ENCODE measurements at regions of chr11 and their contacts with region 1.

Region 1: GRCh38 chr11:111833524-111833923 is 37.9 kb downstream of the ALG9 start:
- DNase-seq: no peak
- H3K4me3 ChIP-seq: no peak overlapping the region
- H3K27ac ChIP-seq: no peak overlapping the region
- H3K4me1 ChIP-seq: no peaks in the 10 kb centered on the region
- H3K27me3 ChIP-seq: no peaks in the 10 kb centered on the region
- CTCF ChIP-seq: peak in 2 of 3 experiments; percentile 14 to 40; a peak in 2 of 4 replicates
- EP300 ChIP-seq: no peak
- POLR2A ChIP-seq: no peak
- RAD21 ChIP-seq: peak; percentile 61 to 64

Region 2: GRCh38 chr11:111745719-111746504 is 87.6 kb before region 1 on chr11:
- CTCF ChIA-PET with region 1: no interaction called
- POLR2A ChIA-PET with region 1: no interaction called
- DNase-seq: no peak
- H3K4me3 ChIP-seq: no peak overlapping the region
- H3K27ac ChIP-seq: no peak overlapping the region
- H3K4me1 ChIP-seq: no peaks in the 10 kb centered on the region
- H3K27me3 ChIP-seq: no peaks in the 10 kb centered on the region
- CTCF ChIP-seq: no peak
- EP300 ChIP-seq: no peak
- POLR2A ChIP-seq: no peak
- RAD21 ChIP-seq: no peak

Region 3: GRCh38 chr11:111846636-111847035 is 13.1 kb after region 1 on chr11:
- CTCF ChIA-PET with region 1: interaction called, 10 read pairs
- POLR2A ChIA-PET with region 1: no interaction called
- DNase-seq: no peak
- H3K4me3 ChIP-seq: no peak overlapping the region
- H3K27ac ChIP-seq: no peak overlapping the region
- H3K4me1 ChIP-seq: no peaks in the 10 kb centered on the region; a peak in 1 of 7 replicates
- H3K27me3 ChIP-seq: no peaks in the 10 kb centered on the region
- CTCF ChIP-seq: no peak
- EP300 ChIP-seq: no peak
- POLR2A ChIP-seq: no peak
- RAD21 ChIP-seq: no peak